SK-N-SH (cell line): ENCODE measurements at regions of chrX and their contacts with region 1.

Region 1: DNA sequence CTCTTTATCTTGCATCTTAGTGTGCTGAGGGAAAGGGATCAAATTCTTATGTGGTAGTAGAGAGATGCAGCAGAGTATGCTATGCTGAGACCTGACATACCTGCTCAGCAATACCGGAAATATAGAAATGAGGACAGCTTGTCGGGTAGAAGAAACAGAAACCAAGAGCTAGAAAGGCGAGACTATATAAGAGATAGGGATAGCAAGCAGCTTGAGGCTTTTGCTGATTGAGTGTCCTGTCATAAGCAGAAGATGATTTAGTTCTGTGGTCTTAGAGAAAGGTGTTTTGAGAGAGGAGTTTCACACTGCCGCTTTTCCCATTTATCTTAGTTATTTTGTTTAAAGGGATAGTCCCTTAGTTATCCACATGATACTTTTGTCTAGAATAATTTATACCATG is 31.7 kb downstream of the USP9X start:
- DNase-seq: no peak
- H3K4me3 ChIP-seq: no peak overlapping the region
- H3K27ac ChIP-seq: peak overlapping the region in 1 of 2 experiments; percentile 19; a peak in 1 of 4 replicates
- H3K4me1 ChIP-seq: peaks cover 0 to 16% of the 10 kb centered on the region in 2 experiments; a peak in 3 of 4 replicates
- H3K27me3 ChIP-seq: no peaks in the 10 kb centered on the region
- CTCF ChIP-seq: no peak
- EP300 ChIP-seq: no peak
- RAD21 ChIP-seq: no peak

Region 2: GRCh38 chrX:40651620-40652223 is 465.2 kb before region 1 on chrX:
- CTCF ChIA-PET with region 1: interaction called, 16 read pairs
- POLR2A ChIA-PET with region 1: interaction called, 4 read pairs
- DNase-seq: peak; percentile 48
- H3K4me3 ChIP-seq: no peak overlapping the region
- H3K27ac ChIP-seq: no peak overlapping the region
- H3K4me1 ChIP-seq: peaks cover 3 to 4% of the 10 kb centered on the region in 2 experiments; a peak in 2 of 4 replicates
- H3K27me3 ChIP-seq: no peaks in the 10 kb centered on the region
- CTCF ChIP-seq: peak; percentile 90
- EP300 ChIP-seq: no peak
- RAD21 ChIP-seq: peak; percentile 92

Region 3: DNA sequence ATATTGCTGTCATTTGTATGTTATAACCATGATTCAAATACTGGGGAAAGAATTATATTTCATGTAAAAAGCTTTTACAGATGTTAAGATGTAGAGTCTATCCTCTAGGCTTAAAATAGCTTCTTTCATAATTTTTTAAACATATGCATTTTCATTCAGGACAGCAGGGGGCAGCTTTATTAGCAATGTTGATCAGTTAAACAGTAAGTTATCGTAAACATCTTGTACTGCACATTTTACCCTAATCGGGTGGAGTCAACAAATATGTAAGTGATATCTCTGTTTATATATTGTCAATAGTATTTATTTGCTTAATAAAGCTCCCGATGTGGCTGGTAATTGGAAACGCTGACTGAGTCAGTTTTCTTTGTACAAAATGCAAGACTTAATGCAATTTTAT is 239.1 kb before region 1 on chrX:
- CTCF ChIA-PET with region 1: interaction called, 29 read pairs
- POLR2A ChIA-PET with region 1: no interaction called
- DNase-seq: peak; percentile 19
- H3K4me3 ChIP-seq: no peak overlapping the region
- H3K27ac ChIP-seq: no peak overlapping the region
- H3K4me1 ChIP-seq: no peaks in the 10 kb centered on the region
- H3K27me3 ChIP-seq: peaks cover 11% of the 10 kb centered on the region; the same call in 1 of the 2 replicates
- CTCF ChIP-seq: peak; percentile 75
- EP300 ChIP-seq: no peak
- RAD21 ChIP-seq: peak; percentile 60

Region 4: DNA sequence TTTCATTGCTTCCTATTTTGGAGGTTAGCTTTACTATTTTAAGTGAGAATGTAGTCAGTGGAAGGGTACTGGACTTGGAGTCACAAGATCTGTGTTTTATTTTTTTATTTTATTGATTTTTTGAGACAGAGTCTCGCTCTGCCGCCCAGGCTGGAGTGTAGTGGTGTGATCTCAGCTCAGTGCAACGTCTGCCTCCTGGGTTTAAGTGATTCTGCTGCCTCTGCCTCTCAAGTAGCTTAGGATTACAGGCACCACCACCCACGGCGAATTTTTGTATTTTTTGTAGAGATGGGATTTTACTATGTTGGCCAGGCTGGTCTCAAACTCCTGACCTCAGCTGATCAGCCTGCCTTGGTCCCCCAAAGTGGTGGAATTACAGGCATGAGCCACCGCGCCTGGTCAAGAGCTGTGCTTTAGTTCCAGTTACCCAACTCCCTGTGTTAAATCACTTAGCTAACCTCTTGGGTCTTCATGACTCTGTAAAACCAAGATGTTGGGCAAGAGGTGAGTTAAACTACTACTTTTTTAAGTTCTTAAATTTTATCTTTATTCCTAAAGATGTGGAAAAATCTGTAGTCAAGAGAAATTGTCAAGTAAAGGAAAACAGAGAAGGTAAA is 20.5 kb before region 1 on chrX:
- CTCF ChIA-PET with region 1: interaction called, 19 read pairs
- POLR2A ChIA-PET with region 1: no interaction called
- DNase-seq: no peak
- H3K4me3 ChIP-seq: no peak overlapping the region
- H3K27ac ChIP-seq: peak overlapping the region in 1 of 2 experiments; percentile 80; a peak in 2 of 4 replicates
- H3K4me1 ChIP-seq: peaks cover 2 to 7% of the 10 kb centered on the region in 2 experiments; a peak in 2 of 4 replicates
- H3K27me3 ChIP-seq: no peaks in the 10 kb centered on the region
- CTCF ChIP-seq: no peak
- EP300 ChIP-seq: no peak
- RAD21 ChIP-seq: no peak

Region 5: GRCh38 chrX:41137589-41137988 is 20.6 kb after region 1 on chrX:
- CTCF ChIA-PET with region 1: interaction called, 10 read pairs
- POLR2A ChIA-PET with region 1: no interaction called
- DNase-seq: no peak
- H3K4me3 ChIP-seq: no peak overlapping the region
- H3K27ac ChIP-seq: no peak overlapping the region
- H3K4me1 ChIP-seq: no peaks in the 10 kb centered on the region
- H3K27me3 ChIP-seq: no peaks in the 10 kb centered on the region
- CTCF ChIP-seq: peak; percentile 70
- EP300 ChIP-seq: no peak
- RAD21 ChIP-seq: peak; percentile 22; the same call in 1 of the 2 replicates